ENCODE measurements at regions of chr1 and their contacts with region 1.

Region 1: DNA sequence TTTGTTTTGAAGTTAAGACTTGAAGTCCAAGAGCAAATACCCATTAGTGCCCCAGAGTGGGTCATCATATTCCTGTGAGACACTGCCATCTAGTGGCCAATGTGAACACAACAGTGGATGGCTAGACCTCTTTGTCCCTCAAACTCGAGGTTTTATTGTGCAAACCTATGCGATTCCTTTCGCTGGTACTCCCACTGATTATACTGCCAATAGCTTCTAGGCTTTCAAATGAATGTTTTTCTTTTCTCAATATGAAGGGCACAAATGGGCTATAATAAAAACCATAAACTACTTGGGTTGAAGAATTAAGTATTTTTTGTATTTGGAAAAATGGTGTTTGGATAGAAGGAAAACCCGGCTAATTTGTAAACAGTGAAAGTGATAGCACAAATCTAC is 100.4 kb upstream of the ZNF281 start:
- DNase-seq: peak; percentile 93
- H3K27ac ChIP-seq: no peak overlapping the region
- CTCF ChIP-seq: peak; percentile 91

Region 2: DNA sequence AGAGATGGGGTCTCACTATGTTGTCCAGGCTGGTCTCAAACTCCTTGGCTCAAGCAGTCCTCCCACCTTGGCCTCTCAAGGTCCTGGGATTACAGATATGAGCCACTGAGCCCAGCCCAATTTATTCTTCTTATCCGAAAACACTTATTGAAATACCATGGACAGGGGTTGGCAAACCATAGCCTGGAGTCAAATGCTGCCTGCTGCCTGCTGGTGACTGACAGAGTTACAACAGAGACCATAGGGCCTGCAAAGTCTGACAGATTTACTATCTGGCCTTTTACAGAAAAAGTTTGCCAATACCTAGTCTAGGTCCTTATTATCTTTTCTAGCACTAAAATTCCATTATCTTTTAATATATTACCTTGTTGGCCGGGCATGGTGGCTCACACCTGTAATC is 13.3 kb before region 1 on chr1:
- CTCF ChIA-PET with region 1: interaction called, 10 read pairs
- POLR2A ChIA-PET with region 1: no interaction called
- DNase-seq: no peak
- H3K27ac ChIP-seq: no peak overlapping the region
- CTCF ChIP-seq: no peak

Region 3: GRCh38 chr1:200542162-200542561 is 31.9 kb after region 1 on chr1:
- CTCF ChIA-PET with region 1: no interaction called
- POLR2A ChIA-PET with region 1: no interaction called
- DNase-seq: no peak
- H3K27ac ChIP-seq: no peak overlapping the region
- CTCF ChIP-seq: no peak

Region 4: GRCh38 chr1:200699871-200700270 is 189.6 kb after region 1 on chr1:
- CTCF ChIA-PET with region 1: no interaction called
- POLR2A ChIA-PET with region 1: no interaction called
- DNase-seq: no peak
- H3K27ac ChIP-seq: no peak overlapping the region
- CTCF ChIP-seq: no peak

Measured in RWPE1 (cell line).